ENCODE measurements at regions of chr5 and their contacts with region 1.

Region 1: GRCh38 chr5:115098041-115098702 is 71.5 kb downstream of the TRIM36 start:
- DNase-seq: peak; percentile 45
- H3K4me3 Mint-ChIP-seq: no peak overlapping the region
- H3K27ac Mint-ChIP-seq: no peak overlapping the region
- H3K4me1 Mint-ChIP-seq: no peaks in the 10 kb centered on the region
- H3K27me3 Mint-ChIP-seq: peaks cover 6% of the 10 kb centered on the region

Region 2: DNA sequence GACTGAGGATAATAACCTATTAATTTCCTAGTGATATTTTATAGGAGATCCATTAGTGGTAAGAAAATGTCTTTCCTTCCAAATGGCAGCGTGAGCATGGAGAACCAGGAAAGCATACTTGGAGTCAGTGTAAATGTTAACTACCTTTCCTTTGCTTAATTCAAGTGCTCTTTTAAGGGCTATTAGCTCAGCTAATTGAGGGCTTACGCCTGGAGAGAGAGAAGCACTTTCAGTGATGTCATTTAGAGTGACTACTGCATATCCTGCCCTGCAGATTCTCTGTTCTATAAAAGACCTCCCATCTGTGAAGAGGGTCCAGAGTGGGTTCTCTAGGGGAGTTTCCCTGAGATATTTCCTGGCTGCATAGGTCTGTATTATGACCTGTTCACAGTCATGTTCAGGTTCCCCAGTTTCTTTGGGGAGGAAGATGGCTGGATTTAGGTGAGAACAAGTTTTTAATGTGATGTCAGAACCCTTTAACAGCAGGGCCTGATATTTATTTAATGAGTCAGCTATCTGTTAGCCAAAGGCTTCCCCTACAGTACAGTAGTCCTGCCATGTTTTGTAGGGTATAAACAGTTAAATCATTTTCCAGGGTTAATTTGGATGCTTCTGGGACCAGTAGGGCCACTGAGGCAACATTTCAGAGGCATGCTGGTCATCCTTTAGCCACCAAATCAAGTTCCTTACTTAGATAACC is 18.1 kb before region 1 on chr5:
- CTCF ChIA-PET with region 1: no interaction called
- DNase-seq: no peak
- H3K4me3 Mint-ChIP-seq: no peak overlapping the region
- H3K27ac Mint-ChIP-seq: no peak overlapping the region
- H3K4me1 Mint-ChIP-seq: no peaks in the 10 kb centered on the region
- H3K27me3 Mint-ChIP-seq: peaks cover 5% of the 10 kb centered on the region

Region 3: GRCh38 chr5:115124741-115125140 is 26.6 kb after region 1 on chr5:
- CTCF ChIA-PET with region 1: no interaction called
- DNase-seq: no peak
- H3K4me3 Mint-ChIP-seq: no peak overlapping the region
- H3K27ac Mint-ChIP-seq: no peak overlapping the region
- H3K4me1 Mint-ChIP-seq: no peaks in the 10 kb centered on the region
- H3K27me3 Mint-ChIP-seq: peaks cover 3% of the 10 kb centered on the region

Region 4: GRCh38 chr5:115246361-115246991 is 148.3 kb after region 1 on chr5:
- CTCF ChIA-PET with region 1: interaction called, 50 read pairs
- DNase-seq: no peak
- H3K4me3 Mint-ChIP-seq: no peak overlapping the region
- H3K27ac Mint-ChIP-seq: no peak overlapping the region
- H3K4me1 Mint-ChIP-seq: peaks cover 3% of the 10 kb centered on the region
- H3K27me3 Mint-ChIP-seq: no peaks in the 10 kb centered on the region

Measured in activated naive CD4-positive, alpha-beta T cell treated with anti-CD3 and anti-CD28 coated beads, Interleukin-2, amount 10 ng/mL, durations not matched to agents 7 days and 5 days (primary cell).